HepG2 (cell line): ENCODE measurements at regions of chr1 and their contacts with region 1.

Region 1: DNA sequence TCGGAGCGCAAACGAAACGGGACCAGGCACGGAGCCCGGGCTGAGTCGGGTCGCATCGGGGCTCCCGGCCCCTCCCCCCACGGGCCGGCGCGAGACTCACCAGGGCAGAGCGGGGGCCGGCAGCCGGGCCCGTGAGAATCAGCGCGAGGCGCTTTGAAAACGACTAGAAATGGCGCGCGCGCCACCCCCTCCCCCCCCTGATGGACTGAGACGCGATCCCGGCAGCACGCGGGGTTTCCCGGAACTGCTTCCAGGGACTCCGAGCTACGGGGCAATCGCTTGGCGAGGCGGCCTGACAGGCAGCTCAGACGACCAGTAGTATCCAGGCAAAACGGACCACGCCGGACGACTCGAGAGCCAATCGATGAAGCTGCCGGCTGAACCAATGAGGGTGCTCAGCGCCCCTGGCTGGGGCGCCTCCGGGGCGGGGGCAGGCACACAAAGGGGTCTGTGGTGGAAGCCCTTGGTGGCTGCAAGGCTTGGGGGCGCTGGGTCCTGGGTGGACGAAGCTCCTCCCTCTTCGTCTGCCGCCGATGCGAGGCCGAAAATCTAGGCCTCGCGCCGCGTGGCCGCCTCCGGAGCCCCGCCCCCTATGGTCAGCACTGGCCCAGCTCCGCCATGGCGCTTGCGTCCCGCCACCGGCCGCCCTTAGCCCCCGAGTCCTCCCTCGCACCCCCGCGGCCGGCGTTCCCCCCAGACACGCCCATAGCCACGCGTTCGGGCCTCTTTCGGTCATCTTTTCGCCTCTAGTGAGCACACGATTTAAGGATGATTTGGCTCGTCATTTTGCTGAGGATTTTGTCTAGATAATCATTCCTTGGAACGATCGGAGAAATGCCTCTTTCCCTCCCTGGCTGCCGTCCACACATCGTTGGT is at the start of gene HNRNPR:
- DNase-seq: peak; percentile 99
- ATAC-seq: peak; percentile 97
- H3K4me3 ChIP-seq: peak within 1 kb of the TSS; percentile 81 to 83 (median 83)
- H3K27ac ChIP-seq: peak within 1 kb of the TSS; percentile 94
- H3K4me1 ChIP-seq: peaks cover 31% of the 10 kb centered on the region
- H3K27me3 ChIP-seq: no peaks in the 10 kb centered on the region; a peak in 2 of 5 replicates
- CTCF ChIP-seq: peak; percentile 36
- EP300 ChIP-seq: peak in 1 of 2 experiments; percentile 42; a peak in 2 of 4 replicates
- POLR2A ChIP-seq: peak; percentile 81 to 83
- RAD21 ChIP-seq: no peak
- total RNA-seq, gene HNRNPR: 216 and 303 TPM in 2 replicates

Region 2: GRCh38 chr1:22780696-22781095 is 563.7 kb before region 1 on chr1:
- CTCF ChIA-PET with region 1: no interaction called
- POLR2A ChIA-PET with region 1: no interaction called
- in situ Hi-C with region 1: no loop called
- intact Hi-C with region 1: no loop called
- DNase-seq: no peak
- ATAC-seq: peak; percentile 63; the same call in 2 of the 3 replicates
- H3K4me3 ChIP-seq: no peak overlapping the region
- H3K27ac ChIP-seq: no peak overlapping the region
- H3K4me1 ChIP-seq: no peaks in the 10 kb centered on the region
- H3K27me3 ChIP-seq: peaks cover 0 to 18% of the 10 kb centered on the region in 2 experiments; a peak in 2 of 5 replicates
- CTCF ChIP-seq: no peak
- EP300 ChIP-seq: no peak
- POLR2A ChIP-seq: no peak
- RAD21 ChIP-seq: no peak

Region 3: DNA sequence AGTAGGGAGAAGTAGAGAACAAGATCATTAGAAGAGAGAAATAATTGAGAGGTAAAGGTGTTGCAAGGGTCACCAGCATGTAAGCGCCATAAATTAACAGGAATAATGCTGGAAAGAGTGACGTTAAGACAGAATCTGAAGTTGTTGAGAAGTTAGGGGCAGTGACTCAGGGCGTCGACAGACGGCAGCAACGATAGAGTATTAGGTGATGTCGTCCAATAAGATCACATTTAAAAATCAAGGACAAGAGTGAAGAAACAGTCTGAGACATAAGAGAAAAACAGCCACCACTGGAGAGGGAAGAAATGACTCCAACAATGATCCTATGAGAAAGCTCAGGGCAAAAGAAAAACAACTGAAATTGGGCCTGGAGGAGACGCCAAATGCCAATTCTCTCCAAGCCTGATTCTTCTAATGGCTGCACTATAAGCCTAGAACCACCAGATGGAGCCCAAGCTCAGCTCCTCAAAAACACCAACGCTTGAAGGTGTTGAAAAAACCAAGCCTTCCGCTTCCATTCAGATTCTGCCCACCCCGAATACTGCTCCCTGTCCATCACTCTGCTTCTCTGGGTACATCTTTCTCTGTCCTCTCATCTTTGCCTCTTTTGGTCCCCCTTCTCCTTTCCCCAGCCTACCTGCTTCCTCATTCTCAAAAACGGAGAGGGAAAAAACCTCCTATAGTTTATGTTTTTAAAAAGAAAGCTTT is 245.7 kb before region 1 on chr1:
- CTCF ChIA-PET with region 1: no interaction called
- POLR2A ChIA-PET with region 1: no interaction called
- in situ Hi-C with region 1: no loop called
- intact Hi-C with region 1: no loop called
- DNase-seq: peak; percentile 62
- ATAC-seq: peak; percentile 55; the same call in 2 of the 3 replicates
- H3K4me3 ChIP-seq: no peak overlapping the region
- H3K27ac ChIP-seq: no peak overlapping the region
- H3K4me1 ChIP-seq: peaks cover 50% of the 10 kb centered on the region
- H3K27me3 ChIP-seq: no peaks in the 10 kb centered on the region
- CTCF ChIP-seq: peak; percentile 89
- EP300 ChIP-seq: no peak
- POLR2A ChIP-seq: no peak
- RAD21 ChIP-seq: peak; percentile 92

Region 4: DNA sequence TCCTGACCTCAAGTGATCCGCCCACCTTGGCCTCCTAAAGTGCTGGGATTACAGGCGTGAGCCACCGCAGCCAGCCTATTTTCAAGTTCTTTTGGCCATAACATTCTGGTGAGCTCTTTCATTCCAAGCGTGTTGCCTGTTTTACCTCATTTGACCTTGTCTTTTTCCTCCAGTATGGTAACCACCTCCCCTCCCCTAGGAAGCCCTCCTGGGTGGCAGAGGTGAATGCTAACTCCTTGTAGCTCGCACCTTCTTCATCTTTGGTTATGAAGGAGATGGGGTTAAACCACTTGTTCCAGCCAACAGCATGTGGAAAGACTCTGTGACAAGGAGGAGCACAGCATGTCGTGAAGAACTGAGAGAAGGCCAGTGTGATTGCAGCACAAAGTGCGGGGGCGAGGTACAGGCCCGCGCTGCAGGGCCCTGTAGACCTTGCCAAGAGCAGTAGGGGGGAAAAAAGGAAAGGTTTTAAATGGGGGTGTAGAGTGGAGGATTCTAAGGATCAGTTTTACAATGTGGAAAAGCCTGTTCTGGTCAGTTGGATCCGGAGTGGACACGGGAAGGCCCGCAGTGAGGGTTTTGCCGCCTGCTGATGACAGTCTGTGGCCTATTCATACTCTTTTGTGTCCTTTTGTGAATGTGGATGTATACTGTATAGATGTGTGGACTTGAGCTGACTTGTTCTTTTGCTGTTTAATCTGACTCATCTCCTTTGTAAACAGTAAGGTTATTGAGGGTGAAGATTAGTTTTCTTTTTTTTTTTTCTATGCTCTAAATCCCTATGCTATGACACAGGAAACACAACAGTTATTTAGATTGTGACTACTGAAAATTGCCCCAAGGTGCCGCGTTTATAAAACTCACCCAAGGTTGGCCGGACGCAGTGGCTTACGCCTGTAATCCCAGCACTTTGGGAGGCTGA is 32.8 kb after region 1 on chr1:
- CTCF ChIA-PET with region 1: no interaction called
- POLR2A ChIA-PET with region 1: interaction called, 23 read pairs
- in situ Hi-C with region 1: no loop called
- intact Hi-C with region 1: no loop called
- DNase-seq: peak; percentile 76
- ATAC-seq: peak; percentile 81
- H3K4me3 ChIP-seq: peak overlapping the region; percentile 16 to 50 (median 36); a peak in 5 of 6 replicates
- H3K27ac ChIP-seq: peak overlapping the region; percentile 87
- H3K4me1 ChIP-seq: peaks cover 44% of the 10 kb centered on the region
- H3K27me3 ChIP-seq: no peaks in the 10 kb centered on the region
- CTCF ChIP-seq: no peak
- EP300 ChIP-seq: no peak
- POLR2A ChIP-seq: peak in 1 of 2 experiments; percentile 38; a peak in 1 of 4 replicates
- RAD21 ChIP-seq: no peak